Right ventricle myocardium superior (tissue), 1 donor: ENCODE measurements at regions of chr19 and their contacts with region 1.

Region 1: DNA sequence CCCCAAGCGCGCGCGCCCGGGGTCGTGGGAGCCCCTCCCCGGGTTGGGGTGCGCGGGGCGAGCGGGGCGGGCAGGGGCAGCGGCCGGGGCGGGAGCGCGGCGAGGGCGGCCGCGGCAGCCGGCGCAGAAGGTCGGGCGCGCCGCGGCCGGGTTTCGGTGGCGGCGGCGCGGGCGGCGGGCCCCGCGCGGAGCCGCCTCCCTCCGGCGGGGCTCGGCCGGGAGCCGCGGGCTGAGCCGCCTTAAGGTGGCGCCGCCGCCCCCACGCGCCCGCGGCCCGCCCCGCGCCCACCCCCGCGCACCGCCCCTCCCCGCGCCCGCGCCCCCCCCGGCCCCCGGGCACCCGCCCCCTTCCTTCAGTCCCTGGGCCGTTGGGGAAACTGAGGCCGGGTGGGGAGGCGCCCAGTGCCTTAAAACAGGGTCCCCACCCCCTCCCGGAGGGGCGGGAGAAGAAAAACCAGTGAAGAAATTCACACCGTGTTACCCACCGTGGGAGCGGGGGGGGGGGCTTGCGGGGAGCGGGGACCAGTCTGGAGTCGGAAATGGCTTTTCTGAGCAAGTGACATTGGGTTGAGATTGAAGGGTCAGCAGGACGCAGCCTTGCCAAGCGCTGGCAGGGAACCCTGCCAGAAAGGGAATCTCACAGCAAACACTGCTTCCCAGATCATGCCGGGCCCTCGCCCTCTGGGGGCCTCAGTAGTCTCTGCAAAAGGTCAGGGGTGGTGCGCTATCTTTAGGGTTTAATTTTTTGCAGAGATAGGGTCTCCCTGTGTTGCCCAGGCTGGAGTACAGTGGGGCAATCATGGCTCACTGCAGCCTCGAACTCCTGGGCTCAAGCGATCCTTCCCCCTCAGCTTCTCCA is at the start of gene TLE2:
- DNase-seq: peak; percentile 52
- ATAC-seq: peak; percentile 57
- total RNA-seq, gene TLE2: 55.7 TPM

Region 2: DNA sequence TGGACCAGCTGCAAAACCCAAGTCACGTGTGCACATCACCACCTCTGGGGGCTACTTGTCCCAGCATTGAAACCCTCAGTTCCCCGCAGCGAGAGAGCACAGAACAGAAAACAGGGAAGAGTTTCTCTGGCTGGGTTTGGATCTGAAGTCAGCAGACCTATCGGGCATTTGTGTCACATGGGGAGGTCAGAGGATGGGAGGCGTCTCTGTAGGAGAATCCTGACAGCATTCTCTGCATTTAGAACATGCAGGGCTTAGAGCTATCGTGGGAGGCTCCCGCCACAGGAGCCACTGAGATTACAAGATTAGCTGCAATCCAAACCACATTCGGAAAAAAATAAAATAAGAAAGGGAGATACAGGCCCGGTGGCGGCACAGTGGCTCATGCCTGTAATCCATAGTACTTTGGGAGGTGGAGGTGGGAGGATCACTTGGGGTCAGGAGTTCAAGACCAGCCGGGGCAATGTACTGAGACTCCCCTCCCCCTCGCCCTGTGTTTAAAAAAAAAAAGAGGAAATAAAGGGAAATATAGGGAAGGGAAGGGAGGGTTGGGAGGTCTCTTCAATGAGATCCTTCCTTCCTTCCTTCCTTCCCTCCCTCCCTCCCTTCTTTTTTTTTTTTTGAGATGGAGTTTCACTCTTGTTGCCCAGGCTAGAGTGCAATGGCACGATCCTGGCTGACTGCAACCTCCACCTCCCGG is 54.8 kb before region 1 on chr19:
- intact Hi-C with region 1: loop called (anchors 5 kb)
- DNase-seq: peak; percentile 68
- ATAC-seq: peak; percentile 18

Region 3: DNA sequence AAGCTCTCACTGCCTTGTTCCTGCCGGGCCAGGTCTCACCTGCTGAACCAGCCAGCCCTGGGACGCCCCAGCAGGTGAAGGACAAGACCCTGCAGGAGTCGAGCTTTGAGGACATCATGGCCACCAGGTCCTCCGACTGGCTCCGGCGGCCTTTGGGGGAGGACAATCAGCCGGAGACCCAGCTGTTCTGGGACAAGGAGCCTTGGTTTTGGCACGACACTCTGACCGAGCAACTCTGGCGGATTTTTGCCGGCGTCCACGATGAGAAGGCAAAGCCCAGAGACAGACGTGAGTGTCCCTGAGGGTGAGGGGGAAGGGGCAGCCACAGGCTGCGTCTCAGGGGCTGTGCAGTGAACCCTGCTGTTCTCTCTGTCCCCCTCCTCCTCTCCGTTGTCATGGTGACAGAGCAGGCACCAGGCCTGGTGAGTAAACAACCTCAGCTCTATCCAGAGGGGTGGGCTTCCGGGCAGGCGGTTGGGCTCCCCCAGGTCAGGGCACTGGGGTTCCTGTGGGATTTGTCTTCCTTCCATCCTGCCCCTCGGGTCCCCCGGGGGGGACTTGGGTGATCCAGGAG is 42.3 kb before region 1 on chr19:
- intact Hi-C with region 1: loop called (anchors 5 kb)
- DNase-seq: no peak
- ATAC-seq: no peak

Region 4: GRCh38 chr19:3520166-3521103 is 491.1 kb after region 1 on chr19:
- intact Hi-C with region 1: no loop called
- DNase-seq: no peak
- ATAC-seq: no peak

Region 5: GRCh38 chr19:3586124-3586626 is 556.9 kb after region 1 on chr19:
- intact Hi-C with region 1: no loop called
- DNase-seq: no peak
- ATAC-seq: no peak